ENCODE measurements at regions of chr18 and their contacts with region 1.

Region 1: DNA sequence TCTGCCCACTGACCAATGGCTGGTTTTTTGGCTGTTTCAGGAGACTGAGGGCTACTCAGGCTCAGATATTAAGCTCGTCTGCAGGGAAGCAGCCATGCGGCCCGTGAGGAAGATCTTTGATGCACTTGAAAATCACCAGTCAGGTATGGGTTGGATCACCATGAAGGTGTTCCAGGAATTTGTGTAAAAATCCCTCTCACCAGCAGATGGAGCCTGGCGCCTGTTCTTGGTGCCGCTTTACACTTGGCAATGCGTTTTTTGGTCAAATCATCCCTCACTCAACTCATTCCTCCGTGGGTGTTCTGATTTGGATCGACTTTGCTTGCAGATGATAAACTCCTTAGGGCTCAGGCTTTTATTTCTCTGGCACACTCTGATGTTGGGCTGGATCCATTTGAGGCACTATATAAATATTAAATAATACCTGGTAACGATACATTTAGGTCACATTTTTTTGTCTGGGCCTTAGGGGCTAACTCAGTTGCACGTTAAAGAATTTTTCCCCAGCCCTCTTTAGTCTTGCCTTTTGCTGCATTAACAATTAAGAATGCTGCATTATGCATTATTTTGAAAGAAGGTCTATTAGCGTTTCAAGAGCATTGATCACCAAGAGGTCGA is 50.0 kb downstream of the HDHD2 start:
- DNase-seq: peak; percentile 52
- H3K4me3 ChIP-seq: no peak overlapping the region
- H3K27ac ChIP-seq: no peak overlapping the region
- H3K4me1 ChIP-seq: no peaks in the 10 kb centered on the region
- H3K27me3 ChIP-seq: no peaks in the 10 kb centered on the region
- CTCF ChIP-seq: peak; percentile 70 to 88

Region 2: DNA sequence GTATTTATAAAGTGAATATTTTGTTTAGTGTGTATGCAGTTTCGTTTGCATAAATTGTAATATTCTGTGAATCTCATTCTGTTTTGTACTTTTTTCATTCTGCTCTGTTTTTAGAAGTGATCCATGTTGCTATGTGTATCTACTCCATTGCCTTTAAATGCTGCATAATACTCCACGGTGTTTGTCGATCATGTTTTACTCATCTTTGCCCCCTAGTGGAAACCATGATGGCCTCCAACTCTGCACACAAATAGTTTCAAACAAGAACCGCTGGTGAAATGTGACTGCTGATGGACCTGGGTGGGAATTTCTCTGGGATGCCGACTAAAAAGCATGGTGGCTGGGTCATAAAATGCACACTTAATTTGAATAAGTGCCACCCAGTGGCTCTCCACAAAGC is 183.2 kb after region 1 on chr18:
- CTCF ChIA-PET with region 1: no interaction called
- dilution Hi-C with region 1: no loop called
- in situ Hi-C with region 1: no loop called
- intact Hi-C with region 1: loop called (anchors 10 kb)
- DNase-seq: no peak
- H3K4me3 ChIP-seq: no peak overlapping the region
- H3K27ac ChIP-seq: no peak overlapping the region
- H3K4me1 ChIP-seq: no peaks in the 10 kb centered on the region
- H3K27me3 ChIP-seq: peaks cover 1% of the 10 kb centered on the region
- CTCF ChIP-seq: peak; percentile 33 to 40

Region 3: DNA sequence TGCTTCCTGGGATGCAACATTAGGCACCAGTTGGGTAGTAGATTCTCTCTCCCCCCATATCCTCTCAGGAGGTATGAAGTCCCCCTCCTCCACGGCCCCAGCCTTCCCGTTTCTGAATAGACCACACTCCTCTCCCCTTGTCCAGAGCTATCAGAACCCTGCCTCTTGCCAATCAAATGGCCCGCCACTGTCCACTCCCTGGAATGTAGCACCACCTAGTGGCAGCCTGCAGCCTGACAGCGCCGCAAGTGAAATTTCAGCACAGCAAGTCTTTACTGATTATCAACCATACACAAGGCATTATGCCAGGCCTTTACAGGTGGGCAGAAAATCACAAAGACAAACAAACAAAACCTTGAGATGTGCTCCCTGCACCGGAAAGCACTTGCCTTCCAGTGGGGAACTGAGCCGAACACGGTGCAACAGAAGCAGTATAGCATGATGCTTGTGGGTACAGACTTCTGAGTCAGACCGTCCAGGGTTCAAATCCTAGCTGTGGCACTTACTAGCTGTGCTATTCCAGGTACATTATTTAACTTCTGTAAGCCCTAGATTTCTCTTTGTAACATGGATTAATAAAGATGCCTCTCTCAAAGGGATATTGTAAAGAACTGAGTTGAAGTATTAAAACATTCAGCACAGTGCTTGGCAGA is 656.2 kb after region 1 on chr18:
- CTCF ChIA-PET with region 1: no interaction called
- dilution Hi-C with region 1: no loop called
- in situ Hi-C with region 1: loop called in 1 of 2 experiments (anchors 10 kb)
- intact Hi-C with region 1: no loop called
- DNase-seq: peak; percentile 25
- H3K4me3 ChIP-seq: no peak overlapping the region
- H3K27ac ChIP-seq: no peak overlapping the region
- H3K4me1 ChIP-seq: no peaks in the 10 kb centered on the region
- H3K27me3 ChIP-seq: no peaks in the 10 kb centered on the region
- CTCF ChIP-seq: peak; percentile 95 to 99